Activated CD4-positive, alpha-beta T cell treated with anti-CD3 and anti-CD28 coated beads for 36 hours (primary cell): ENCODE measurements at regions of chr19 and their contacts with region 1.

Region 1: GRCh38 chr19:13731147-13731964 is 33.0 kb upstream of the MRI1 start:
- DNase-seq: peak; percentile 97
- ATAC-seq: peak; percentile 99
- H3K4me3 Mint-ChIP-seq: peak overlapping the region; percentile 87
- H3K27ac Mint-ChIP-seq: peak overlapping the region; percentile 94
- H3K4me1 Mint-ChIP-seq: peaks cover 25% of the 10 kb centered on the region
- H3K27me3 Mint-ChIP-seq: no peaks in the 10 kb centered on the region

Region 2: GRCh38 chr19:13621413-13621812 is 109.9 kb before region 1 on chr19:
- CTCF ChIA-PET with region 1: no interaction called
- POLR2A ChIA-PET with region 1: no interaction called
- intact Hi-C with region 1: loop called in 1 of 2 experiments (anchors 10 kb)
- DNase-seq: peak; percentile 76
- ATAC-seq: peak; percentile 99
- H3K4me3 Mint-ChIP-seq: no peak overlapping the region
- H3K27ac Mint-ChIP-seq: no peak overlapping the region
- H3K4me1 Mint-ChIP-seq: peaks cover 2% of the 10 kb centered on the region
- H3K27me3 Mint-ChIP-seq: peaks cover 39% of the 10 kb centered on the region

Region 3: GRCh38 chr19:13681509-13681908 is 49.8 kb before region 1 on chr19:
- CTCF ChIA-PET with region 1: no interaction called
- POLR2A ChIA-PET with region 1: no interaction called
- intact Hi-C with region 1: no loop called
- DNase-seq: no peak
- ATAC-seq: no peak
- H3K4me3 Mint-ChIP-seq: no peak overlapping the region
- H3K27ac Mint-ChIP-seq: no peak overlapping the region
- H3K4me1 Mint-ChIP-seq: no peaks in the 10 kb centered on the region
- H3K27me3 Mint-ChIP-seq: peaks cover 10% of the 10 kb centered on the region

Region 4: DNA sequence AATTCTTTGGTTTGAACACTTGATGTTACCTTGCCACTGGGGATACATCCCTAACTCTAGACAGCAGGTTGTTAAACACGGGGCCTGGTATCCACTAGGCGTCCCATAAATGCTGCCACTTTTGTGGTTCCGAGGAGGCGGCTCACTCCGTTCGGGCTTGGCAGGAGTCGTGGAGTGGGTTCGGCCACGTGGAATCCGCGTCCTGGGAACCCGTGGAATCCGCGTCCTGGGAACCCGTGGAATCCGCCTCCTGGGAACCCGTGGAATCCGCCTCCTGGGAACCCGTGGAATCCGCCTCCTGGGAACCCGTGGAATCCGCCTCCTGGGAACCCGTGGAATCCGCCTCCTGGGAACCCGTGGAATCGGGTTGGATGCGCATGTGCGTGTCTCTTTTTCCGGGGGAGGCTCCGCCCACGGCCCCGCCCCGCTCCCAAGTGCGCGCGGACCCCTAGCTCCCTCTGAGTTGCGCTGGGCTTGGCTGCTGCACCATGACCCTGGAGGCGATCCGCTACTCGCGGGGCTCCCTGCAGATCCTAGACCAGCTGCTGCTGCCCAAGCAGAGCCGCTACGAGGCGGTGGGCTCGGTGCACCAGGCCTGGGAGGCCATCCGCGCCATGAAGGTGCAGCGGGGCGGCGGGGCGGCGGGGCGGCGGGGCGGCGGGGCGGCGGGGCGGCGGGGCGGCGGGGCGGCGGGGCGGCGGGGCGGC is 32.9 kb after region 1 on chr19 and contains the start of gene MRI1:
- CTCF ChIA-PET with region 1: no interaction called
- POLR2A ChIA-PET with region 1: no interaction called
- intact Hi-C with region 1: loop called in 1 of 2 experiments (anchors 1 kb)
- DNase-seq: peak; percentile 77
- ATAC-seq: peak; percentile 86
- H3K4me3 Mint-ChIP-seq: peak within 1 kb of the TSS; percentile 90
- H3K27ac Mint-ChIP-seq: peak within 1 kb of the TSS; percentile 90
- H3K4me1 Mint-ChIP-seq: peaks cover 16% of the 10 kb centered on the region
- H3K27me3 Mint-ChIP-seq: no peaks in the 10 kb centered on the region
- total RNA-seq, gene MRI1: 35.9 to 39.9 TPM

Region 5: DNA sequence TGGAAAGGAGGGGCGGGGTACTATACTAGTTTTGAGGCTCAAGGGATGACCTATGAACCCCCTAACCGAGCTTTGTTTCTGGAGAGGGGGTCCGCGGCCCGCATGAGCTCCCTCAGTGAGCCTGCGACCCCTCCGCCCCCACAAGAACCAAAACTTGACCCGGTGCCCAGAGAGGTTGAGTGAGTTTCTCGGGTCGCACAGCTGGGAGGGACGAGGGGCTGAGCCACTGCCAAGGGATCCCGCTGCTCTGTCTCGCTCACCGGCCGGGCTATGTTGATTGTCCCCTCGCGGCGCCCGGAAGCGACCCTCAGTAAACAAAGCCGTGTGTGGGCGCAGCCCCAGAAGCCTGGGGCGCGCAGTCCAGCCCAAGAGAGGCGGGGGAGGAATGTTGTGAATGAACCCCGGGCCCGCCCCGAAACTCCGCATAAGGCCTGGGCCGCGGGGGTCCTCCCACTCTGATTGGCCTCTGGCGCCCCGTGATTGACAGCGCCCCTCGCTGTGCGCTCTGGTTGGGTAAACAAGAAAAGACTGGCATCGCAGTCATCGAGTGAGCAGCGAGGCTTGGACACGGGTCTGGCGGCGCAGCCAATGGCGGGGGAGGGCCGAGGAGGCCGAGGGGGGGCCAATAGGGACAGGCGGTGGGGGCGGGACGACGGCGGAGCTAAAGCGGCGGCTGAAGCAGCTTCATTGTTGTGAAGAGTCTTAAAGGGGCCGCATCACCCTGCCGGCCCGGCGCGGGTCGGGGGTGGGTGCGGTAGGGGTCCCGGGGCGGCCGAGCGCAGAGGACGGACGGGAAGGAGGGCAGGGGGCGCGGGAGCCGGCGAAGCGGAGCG is 63.6 kb after region 1 on chr19 and contains the start of gene ZSWIM4:
- CTCF ChIA-PET with region 1: no interaction called
- POLR2A ChIA-PET with region 1: interaction called, 3 read pairs
- intact Hi-C with region 1: loop called in 1 of 2 experiments (anchors 1 kb)
- DNase-seq: peak; percentile 98
- ATAC-seq: peak; percentile 99
- H3K4me3 Mint-ChIP-seq: peak within 1 kb of the TSS; percentile 96
- H3K27ac Mint-ChIP-seq: peak within 1 kb of the TSS; percentile 94
- H3K4me1 Mint-ChIP-seq: peaks cover 24% of the 10 kb centered on the region
- H3K27me3 Mint-ChIP-seq: no peaks in the 10 kb centered on the region
- total RNA-seq, gene ZSWIM4: 5.6 to 5.8 TPM